Caco-2 (cell line): ENCODE measurements at regions of chr1 and their contacts with region 1.

Region 1: GRCh38 chr1:246566128-246566812 is at the starts of genes CNST and TFB2M:
- DNase-seq: peak; percentile 98
- H3K4me3 ChIP-seq: peak within 1 kb of the TSS; percentile 71
- H3K4me3 Mint-ChIP-seq: peak within 1 kb of the TSS; percentile 93
- H3K27ac Mint-ChIP-seq: peak within 1 kb of the TSS; percentile 90
- H3K4me1 ChIP-seq: peaks cover 4% of the 10 kb centered on the region; the same call in 1 of the 2 replicates
- H3K4me1 Mint-ChIP-seq: peaks cover 8% of the 10 kb centered on the region
- H3K27me3 ChIP-seq: no peaks in the 10 kb centered on the region
- H3K27me3 Mint-ChIP-seq: no peaks in the 10 kb centered on the region
- CTCF ChIP-seq: no peak
- total RNA-seq, gene CNST: 14.8 and 15.3 TPM in 2 replicates
- total RNA-seq, gene TFB2M: 23.4 and 23.9 TPM in 2 replicates

Region 2: GRCh38 chr1:246583056-246583848 is 17.0 kb after region 1 on chr1:
- CTCF ChIA-PET with region 1: no interaction called
- POLR2A ChIA-PET with region 1: no interaction called
- intact Hi-C with region 1: loop called (anchors 2 kb)
- DNase-seq: peak in 1 of 2 experiments; percentile 23
- H3K4me3 ChIP-seq: no peak overlapping the region
- H3K4me3 Mint-ChIP-seq: no peak overlapping the region
- H3K27ac Mint-ChIP-seq: peak overlapping the region; percentile 43
- H3K4me1 ChIP-seq: peaks cover 18% of the 10 kb centered on the region
- H3K4me1 Mint-ChIP-seq: peaks cover 33% of the 10 kb centered on the region
- H3K27me3 ChIP-seq: no peaks in the 10 kb centered on the region
- H3K27me3 Mint-ChIP-seq: no peaks in the 10 kb centered on the region
- CTCF ChIP-seq: no peak